Posterior vena cava (tissue), 2 donors: ENCODE measurements at regions of chr14 and their contacts with region 1.

Region 1: GRCh38 chr14:104267895-104268294 is 129.5 kb downstream of the KIF26A start:
- DNase-seq: peak; percentile 65

Region 2: DNA sequence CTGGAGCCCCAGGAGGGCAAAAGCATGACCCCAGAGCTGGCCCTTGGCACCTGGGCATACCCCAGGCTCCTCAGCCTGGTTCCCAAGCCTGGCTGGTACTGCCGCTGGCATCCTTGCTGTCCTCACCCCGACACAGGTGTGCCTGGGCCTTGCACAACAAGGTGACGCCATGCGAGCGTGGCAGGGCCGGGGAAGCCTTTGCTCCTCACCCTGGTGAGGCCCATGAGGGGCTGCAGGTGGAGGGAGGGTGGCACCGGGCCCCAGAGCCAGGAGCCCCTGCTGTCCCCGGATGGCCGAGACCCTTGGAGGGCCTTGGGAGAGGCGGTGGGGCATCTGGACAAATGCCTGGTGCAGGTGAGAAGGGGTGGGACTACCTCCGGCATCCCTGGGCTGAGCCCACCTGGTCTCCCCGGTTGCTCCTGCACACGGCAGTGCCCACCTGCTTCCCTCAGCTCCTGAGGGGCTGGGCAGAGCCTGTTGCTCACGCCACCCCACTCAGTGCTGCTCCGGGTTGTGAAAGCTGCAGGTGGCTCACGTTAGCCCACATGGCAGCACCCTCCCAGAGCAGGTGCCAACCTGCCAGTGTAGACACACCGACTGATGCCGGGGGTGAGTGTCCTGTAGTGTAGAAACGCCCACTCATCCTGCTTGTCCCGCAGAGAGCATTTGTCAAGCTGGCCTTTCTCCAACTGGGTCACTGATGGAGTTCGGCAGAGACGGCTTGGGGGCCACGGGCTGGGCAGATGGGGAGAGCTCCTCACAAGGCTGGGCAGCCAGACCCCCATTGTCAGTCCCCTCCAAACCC is 154.1 kb before region 1 on chr14:
- intact Hi-C with region 1: loop called in 1 of 2 experiments (anchors 5 kb)
- DNase-seq: peak; percentile 69

Region 3: DNA sequence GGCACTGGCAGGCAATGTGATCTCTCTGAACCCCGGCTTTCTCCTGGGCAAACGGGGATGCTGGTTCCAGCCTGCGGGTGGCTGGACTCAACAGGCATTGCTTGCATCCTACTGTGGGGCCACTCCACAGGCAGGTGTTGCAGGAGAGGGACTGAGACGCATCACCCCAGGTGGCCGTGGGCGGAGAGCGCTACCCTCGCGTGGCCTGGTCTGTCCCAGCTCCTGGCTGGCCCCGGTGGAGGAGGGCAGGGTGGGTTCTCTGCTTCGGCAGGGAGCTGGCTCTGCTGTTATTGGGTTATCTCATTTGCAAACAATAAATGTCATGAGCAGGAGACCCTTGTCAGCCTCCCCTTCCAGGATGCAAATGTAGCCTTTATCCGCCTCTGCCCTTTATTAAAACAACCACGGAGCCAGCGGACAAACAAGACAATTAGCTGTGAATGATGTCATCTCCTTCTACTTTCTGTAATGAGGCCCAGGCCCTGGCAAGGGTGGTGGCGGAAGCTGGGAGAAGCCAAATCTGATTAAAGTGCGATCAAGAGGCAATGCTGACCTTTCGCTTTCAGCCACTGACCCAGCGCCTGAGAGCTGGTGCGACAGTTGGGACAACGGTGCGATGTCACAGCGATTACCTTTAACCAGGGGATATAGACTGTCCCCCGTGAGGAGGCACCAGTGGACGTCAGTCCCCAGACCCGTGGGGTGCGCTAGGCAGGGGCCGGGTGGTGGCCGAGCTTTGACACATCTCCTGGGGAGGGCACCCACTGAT is 32.3 kb after region 1 on chr14:
- intact Hi-C with region 1: loop called in 1 of 2 experiments (anchors 1 kb)
- DNase-seq: peak; percentile 80

Region 4: GRCh38 chr14:104356738-104357688 is 89.1 kb after region 1 on chr14:
- intact Hi-C with region 1: no loop called
- DNase-seq: peak; percentile 68